Motor neuron (in vitro differentiated cells): ENCODE measurements at regions of chr17 and their contacts with region 1.

Region 1: DNA sequence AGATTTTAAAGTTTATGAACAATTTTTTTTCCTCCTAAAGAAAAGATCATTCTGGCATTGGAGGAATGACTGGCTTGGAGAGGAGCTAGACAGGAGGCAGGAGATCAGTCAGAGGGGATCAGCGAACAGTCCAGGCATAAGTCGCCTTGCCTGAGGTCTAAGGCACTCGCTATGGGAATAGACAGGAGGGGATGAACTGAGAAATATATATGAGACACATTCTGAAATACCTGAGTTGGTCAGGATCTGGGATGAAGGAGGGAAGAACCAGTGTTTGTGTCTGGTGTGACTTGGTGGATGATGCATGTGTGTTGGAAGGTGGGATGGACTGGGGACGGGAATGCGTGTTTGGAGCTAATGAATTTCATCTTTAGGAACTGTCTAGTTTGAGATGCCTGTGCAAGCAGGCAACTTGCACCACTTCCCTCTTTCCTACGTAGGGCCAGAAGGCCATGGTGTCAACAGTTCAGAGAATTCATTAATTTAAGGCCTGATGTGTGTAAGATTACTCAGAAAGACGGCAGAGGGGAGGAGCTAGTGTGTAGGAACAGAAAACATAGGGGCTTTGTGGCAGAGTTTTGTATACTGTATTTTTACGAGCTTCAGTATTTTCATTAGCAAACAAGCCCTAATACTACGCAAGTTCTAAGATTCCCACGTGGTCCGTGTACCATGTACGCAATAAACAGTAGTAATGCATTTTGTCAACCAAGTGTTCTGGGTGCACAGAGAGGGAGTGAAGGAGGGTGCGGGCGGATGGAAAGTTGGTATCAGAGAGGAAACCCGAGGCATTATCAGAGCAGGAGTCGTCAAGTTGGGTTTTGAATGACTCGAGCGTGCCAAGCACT is 825 bp downstream of the HEATR6 start:
- ATAC-seq: peak; percentile 10 to 46 (median 36)
- H3K4me3 ChIP-seq: peak overlapping the region; percentile 56 to 99 (median 66)
- H3K27ac ChIP-seq: peak overlapping the region; percentile 87 to 93
- H3K4me1 ChIP-seq: peaks cover 14 to 20% of the 10 kb centered on the region in 2 donors

Region 2: DNA sequence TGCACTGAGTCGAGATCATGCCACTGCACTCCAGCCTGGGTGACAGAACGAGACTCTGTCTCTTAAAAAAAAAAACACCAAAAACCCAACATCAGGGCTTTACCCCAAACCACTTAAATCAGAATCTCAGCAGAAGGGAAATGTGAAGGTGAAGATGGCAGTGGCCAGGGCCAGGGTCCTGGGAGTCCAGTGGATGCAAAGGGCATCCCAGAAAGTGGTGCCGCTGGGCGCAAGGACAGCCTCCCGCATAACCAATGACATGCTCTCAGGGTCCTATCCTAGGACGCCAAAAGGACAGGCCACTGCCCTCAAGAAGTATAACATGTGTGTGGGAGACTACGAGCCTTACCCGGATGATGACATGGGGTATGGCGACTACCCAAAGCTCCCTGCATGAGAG is 193.0 kb before region 1 on chr17:
- in situ Hi-C with region 1: no loop called
- ATAC-seq: no peak
- H3K4me3 ChIP-seq: no peak overlapping the region
- H3K27ac ChIP-seq: no peak overlapping the region
- H3K4me1 ChIP-seq: no peaks in the 10 kb centered on the region

Region 3: DNA sequence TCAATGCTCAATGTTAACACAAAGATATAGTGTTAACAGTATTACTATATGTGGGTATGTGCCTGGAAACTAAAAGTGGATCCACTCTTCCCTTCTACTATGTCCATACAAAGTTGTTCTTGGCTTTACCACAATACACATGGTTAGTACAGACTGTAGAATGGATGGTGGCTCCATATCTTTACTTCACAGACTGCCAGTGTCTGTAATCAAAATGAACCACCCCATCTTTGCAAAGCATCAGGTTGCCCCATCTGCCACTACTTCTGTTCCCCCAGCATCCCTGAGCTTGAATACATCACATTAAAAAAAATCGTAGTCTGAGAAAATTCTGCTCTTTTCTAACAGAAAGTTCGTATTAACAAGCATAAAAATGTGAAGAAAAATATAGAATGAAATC is 284.0 kb after region 1 on chr17:
- in situ Hi-C with region 1: no loop called
- ATAC-seq: peak in 1 of 8 experiments; percentile 34
- H3K4me3 ChIP-seq: no peak overlapping the region
- H3K27ac ChIP-seq: no peak overlapping the region
- H3K4me1 ChIP-seq: peaks cover 0 to 10% of the 10 kb centered on the region in 2 donors

Region 4: GRCh38 chr17:60421273-60421934 is 343.5 kb after region 1 on chr17:
- in situ Hi-C with region 1: loop called in 1 of 9 experiments (anchors 25 kb)
- ATAC-seq: peak; percentile 94 to 100 (median 98)
- H3K4me3 ChIP-seq: peak overlapping the region in 4 of 5 donors; percentile 24 to 42 (median 36)
- H3K27ac ChIP-seq: no peak overlapping the region
- H3K4me1 ChIP-seq: no peaks in the 10 kb centered on the region